Activated CD4-positive, alpha-beta T cell treated with anti-CD3 and anti-CD28 coated beads for 36 hours (primary cell): ENCODE measurements at regions of chr1 and their contacts with region 1.

Region 1: GRCh38 chr1:39408641-39409054 is 82.8 kb upstream of the BMP8A start:
- DNase-seq: peak; percentile 89
- ATAC-seq: peak; percentile 79
- H3K4me3 Mint-ChIP-seq: peak overlapping the region; percentile 80
- H3K27ac Mint-ChIP-seq: no peak overlapping the region
- H3K4me1 Mint-ChIP-seq: peaks cover 63% of the 10 kb centered on the region
- H3K27me3 Mint-ChIP-seq: no peaks in the 10 kb centered on the region

Region 2: DNA sequence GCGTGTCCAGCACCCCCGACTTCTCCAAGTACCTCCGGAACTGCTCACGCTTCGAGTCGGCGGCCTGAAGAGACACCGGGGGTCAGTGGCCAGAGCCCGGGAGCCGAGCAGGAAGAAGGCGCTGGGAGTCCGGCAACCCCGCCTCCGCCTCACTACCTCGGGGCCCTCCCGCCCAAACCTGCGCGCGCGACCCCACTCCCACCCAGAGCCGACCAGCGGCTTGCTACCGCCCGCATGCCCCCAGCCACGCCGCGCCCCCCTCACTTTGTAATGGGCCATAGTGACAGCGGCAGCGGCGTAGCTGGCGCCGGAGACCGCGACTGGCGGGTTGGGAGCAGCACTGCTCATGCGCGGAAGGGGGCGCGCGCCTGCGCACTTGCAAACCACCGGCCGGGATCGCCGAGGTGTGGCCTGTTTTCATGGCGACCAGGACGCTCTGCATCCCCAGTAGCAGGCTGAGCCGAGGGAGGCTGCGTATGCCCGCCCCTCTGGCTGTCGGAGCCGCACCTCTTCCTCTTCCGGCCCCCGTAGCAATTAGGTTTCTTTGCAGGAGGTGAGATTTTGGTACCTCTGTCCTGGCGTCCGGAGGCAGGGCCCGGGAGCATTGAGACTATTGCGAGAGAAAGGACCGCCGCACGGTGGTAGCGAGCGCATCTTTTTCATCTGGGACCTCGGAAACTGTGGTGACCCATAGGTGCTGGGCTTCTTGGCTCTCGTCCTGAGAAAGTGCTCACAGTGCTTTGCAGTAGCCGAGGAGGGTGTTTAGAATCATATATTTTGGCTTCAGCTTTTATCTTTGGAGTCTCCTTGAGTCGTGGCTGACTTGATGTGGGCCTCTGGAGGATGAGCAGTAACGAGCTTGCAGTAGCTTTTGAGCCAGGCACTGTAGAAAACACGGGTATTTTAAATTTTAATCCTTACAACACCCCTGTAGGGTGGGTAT is 535.4 kb before region 1 on chr1 and contains the start of gene MYCBP:
- CTCF ChIA-PET with region 1: no interaction called
- POLR2A ChIA-PET with region 1: no interaction called
- intact Hi-C with region 1: loop called in 1 of 2 experiments (anchors 5 kb)
- DNase-seq: peak; percentile 97
- ATAC-seq: peak; percentile 99
- H3K4me3 Mint-ChIP-seq: peak within 1 kb of the TSS; percentile 92
- H3K27ac Mint-ChIP-seq: peak within 1 kb of the TSS; percentile 83
- H3K4me1 Mint-ChIP-seq: peaks cover 26% of the 10 kb centered on the region
- H3K27me3 Mint-ChIP-seq: no peaks in the 10 kb centered on the region
- total RNA-seq, gene MYCBP: 44.4 to 46.8 TPM

Region 3: DNA sequence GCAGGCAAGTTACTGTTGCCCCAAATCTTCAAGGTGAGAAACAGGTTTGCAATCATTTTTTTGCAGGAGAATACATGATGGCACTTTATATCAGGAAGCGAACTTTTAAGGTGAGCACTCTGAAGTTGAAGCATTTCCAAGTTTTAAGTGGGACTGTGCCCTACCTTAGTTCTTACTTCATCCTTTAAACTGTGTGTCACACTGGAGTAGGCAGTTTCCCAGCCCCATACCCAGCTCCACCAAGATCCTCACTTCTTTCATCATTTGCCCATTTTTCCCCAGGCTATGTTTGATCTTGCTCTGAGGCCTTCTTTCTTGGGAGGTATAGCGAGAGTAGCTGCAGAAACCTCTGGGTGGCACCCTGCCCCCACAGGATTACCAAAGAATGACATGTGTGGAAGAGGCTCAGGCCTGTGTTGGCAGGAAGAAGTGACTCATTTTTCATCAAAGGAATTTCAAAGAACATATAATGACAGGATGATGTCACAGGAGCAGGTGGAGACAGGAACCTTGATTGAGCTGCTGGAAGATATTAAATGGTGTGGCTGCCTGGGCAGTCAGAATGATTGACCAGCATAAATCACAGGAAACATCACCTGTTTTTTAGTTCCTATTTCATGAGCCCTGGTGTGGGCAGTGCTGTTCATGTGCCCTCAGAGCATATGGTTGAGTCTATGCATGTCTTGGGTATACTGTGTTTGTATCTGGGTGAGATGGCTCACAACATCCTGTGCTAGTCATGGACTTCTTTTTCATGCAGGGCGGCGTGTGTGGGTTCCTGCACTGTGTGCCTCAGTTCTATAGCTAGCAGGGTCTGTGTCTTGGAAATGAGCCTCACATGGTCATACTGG is 224.9 kb before region 1 on chr1:
- CTCF ChIA-PET with region 1: interaction called, 3 read pairs
- POLR2A ChIA-PET with region 1: no interaction called
- intact Hi-C with region 1: loop called in 1 of 2 experiments (anchors 2 kb)
- DNase-seq: peak; percentile 90
- ATAC-seq: peak; percentile 84
- H3K4me3 Mint-ChIP-seq: peak overlapping the region; percentile 30
- H3K27ac Mint-ChIP-seq: peak overlapping the region; percentile 98
- H3K4me1 Mint-ChIP-seq: peaks cover 50% of the 10 kb centered on the region
- H3K27me3 Mint-ChIP-seq: no peaks in the 10 kb centered on the region

Region 4: GRCh38 chr1:39391691-39392679 is 16.7 kb before region 1 on chr1:
- CTCF ChIA-PET with region 1: interaction called, 75 read pairs
- POLR2A ChIA-PET with region 1: interaction called, 4 read pairs
- intact Hi-C with region 1: no loop called
- DNase-seq: no peak
- ATAC-seq: peak; percentile 72
- H3K4me3 Mint-ChIP-seq: no peak overlapping the region
- H3K27ac Mint-ChIP-seq: no peak overlapping the region
- H3K4me1 Mint-ChIP-seq: peaks cover 60% of the 10 kb centered on the region
- H3K27me3 Mint-ChIP-seq: no peaks in the 10 kb centered on the region

Region 5: GRCh38 chr1:39427374-39427773 is 18.7 kb after region 1 on chr1:
- CTCF ChIA-PET with region 1: interaction called, 18 read pairs
- POLR2A ChIA-PET with region 1: no interaction called
- intact Hi-C with region 1: no loop called
- DNase-seq: no peak
- ATAC-seq: no peak
- H3K4me3 Mint-ChIP-seq: no peak overlapping the region
- H3K27ac Mint-ChIP-seq: no peak overlapping the region
- H3K4me1 Mint-ChIP-seq: peaks cover 6% of the 10 kb centered on the region
- H3K27me3 Mint-ChIP-seq: no peaks in the 10 kb centered on the region

Region 6: DNA sequence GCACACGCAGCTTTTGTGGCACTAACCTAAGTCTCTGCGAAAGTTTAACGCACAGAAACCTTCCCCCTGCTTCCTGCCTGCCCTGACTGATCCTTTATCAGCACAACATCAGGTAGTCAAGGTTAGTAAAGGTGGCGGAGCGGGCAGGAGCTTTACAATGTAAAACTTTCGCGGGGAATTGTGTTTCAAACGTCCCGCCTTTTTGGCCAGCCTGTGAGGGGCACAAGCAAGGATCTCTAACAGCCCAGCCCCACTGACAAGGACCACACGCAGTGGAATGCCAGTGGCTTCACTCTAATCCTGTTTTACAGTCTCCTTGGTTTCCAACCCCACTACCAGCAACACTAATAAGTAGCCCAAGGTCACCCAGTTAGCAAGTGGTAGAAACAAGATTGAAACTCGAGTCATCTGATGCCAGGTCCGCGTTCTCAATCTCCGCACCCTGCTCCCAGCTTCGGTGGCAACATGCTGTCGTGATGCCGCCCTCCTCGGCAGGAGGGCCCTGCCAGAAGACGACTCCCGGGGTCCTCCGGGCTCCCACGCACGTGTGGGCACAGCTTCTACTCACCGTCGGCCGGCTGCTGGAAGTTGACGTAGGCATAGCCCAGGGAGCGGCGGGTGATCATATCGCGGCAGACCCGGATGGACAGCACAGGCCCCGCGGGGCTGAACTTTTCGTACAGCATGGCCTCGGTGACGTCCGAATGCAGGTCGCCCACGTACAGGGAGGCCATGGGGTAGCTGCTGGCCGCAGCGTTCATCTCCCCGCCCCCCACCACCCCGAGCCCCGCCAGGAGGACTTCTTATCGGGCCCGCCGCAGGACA is 166.8 kb after region 1 on chr1:
- CTCF ChIA-PET with region 1: interaction called, 3 read pairs
- POLR2A ChIA-PET with region 1: no interaction called
- intact Hi-C with region 1: loop called in 1 of 2 experiments (anchors 1 kb)
- DNase-seq: peak; percentile 69
- ATAC-seq: peak; percentile 40
- H3K4me3 Mint-ChIP-seq: peak overlapping the region; percentile 90
- H3K27ac Mint-ChIP-seq: peak overlapping the region; percentile 90
- H3K4me1 Mint-ChIP-seq: peaks cover 42% of the 10 kb centered on the region
- H3K27me3 Mint-ChIP-seq: no peaks in the 10 kb centered on the region

Region 7: DNA sequence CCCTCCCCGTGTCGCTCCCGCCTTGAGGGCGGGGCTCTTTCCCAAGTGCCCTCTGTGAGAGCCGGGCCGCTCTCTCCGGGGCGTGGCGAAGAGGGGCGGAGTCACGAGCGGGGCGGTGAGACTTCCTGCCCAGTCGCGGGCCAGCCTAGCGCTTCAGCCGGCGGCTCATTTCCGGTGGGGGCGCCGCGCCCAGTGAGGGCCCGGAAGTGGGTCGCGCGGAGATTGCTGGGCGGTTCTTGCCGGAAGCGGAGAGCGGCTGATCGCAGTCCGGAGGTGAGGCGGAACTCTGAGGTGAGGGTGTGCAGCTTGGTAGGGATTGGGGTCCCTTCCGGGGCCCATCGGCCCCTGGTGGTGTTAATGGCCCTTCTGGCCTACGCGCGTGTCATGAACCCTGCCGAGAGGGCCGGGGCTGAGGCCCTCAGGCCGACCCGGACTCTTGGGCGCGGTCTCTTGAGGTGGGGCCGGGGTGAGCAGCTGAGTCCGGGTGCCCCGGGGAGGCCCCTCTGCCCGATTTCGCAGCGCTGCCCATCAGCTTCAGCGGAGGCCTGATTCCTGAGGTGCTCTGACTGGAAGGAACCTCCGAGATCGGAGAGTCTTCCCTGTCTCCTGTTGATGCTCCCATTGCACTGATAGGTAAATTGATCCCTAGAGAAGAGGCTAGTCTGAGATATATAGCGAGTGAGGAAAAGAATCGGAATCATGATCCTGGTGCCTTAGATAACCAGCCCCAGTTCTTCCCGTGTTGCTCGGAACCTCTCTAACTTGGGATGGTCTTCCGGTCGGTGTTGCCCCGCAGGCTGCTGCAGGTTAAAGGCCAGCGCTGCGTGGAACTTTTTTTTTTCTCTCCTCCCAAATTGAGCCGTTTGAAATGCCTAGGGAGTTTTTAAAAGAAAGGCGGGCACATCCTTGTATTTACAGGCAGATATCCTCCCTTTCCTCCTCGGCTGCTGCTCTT is 632.1 kb after region 1 on chr1 and contains the start of gene CAP1:
- CTCF ChIA-PET with region 1: no interaction called
- POLR2A ChIA-PET with region 1: no interaction called
- intact Hi-C with region 1: loop called in 1 of 2 experiments (anchors 10 kb)
- DNase-seq: peak; percentile 100
- ATAC-seq: peak; percentile 93
- H3K4me3 Mint-ChIP-seq: peak within 1 kb of the TSS; percentile 99
- H3K27ac Mint-ChIP-seq: peak within 1 kb of the TSS; percentile 99
- H3K4me1 Mint-ChIP-seq: peaks cover 58% of the 10 kb centered on the region
- H3K27me3 Mint-ChIP-seq: no peaks in the 10 kb centered on the region
- total RNA-seq, gene CAP1: 527 to 553 TPM